ENCODE measurements at regions of chr11 and their contacts with region 1.

Region 1: DNA sequence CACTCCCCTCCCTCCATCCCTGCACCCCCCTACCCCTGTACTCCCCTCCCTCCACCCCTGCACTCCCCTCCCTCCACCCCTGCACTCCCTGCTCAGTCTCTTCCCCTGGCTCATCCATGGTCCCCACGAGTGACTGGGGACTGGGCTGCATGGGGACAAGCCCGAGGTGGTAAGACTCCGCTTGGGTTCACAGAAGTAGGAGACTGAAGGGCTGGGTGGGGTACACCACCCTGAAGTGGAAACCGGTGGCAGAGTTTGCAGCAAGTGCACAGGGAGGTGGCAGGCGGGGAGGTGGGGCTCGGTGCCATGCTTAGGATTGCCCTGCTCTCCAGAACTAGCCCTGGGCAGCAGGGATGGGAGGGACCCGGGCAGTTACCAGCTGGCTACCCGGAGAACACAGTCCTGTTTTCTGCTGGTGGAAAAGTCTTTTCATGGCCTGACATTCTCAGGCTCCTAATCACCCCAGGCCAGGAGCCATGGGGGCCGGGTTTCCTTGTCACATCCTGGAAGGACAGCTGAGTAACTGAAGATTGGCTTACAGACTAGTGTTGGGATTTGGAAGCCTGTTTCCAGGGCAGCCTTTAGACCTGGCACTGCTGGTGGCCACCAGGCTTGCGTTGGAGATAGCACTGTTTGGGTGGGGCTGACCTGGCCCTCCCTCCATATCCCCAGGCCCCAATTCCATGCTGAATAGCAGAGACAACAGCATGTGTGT is 348.8 kb downstream of the CTTN start:
- DNase-seq: no peak
- H3K4me3 ChIP-seq: no peak overlapping the region
- H3K27ac ChIP-seq: no peak overlapping the region
- H3K4me1 ChIP-seq: no peaks in the 10 kb centered on the region
- H3K27me3 ChIP-seq: no peaks in the 10 kb centered on the region
- CTCF ChIP-seq: no peak
- EP300 ChIP-seq: no peak
- POLR2A ChIP-seq: no peak

Region 2: GRCh38 chr11:70483077-70483861 is 263.9 kb before region 1 on chr11:
- intact Hi-C with region 1: loop called in 1 of 4 experiments (anchors 5 kb)
- DNase-seq: no peak
- H3K4me3 ChIP-seq: no peak overlapping the region
- H3K27ac ChIP-seq: no peak overlapping the region
- H3K4me1 ChIP-seq: peaks cover 1% of the 10 kb centered on the region
- H3K27me3 ChIP-seq: no peaks in the 10 kb centered on the region
- CTCF ChIP-seq: no peak
- EP300 ChIP-seq: no peak
- POLR2A ChIP-seq: no peak

Region 3: DNA sequence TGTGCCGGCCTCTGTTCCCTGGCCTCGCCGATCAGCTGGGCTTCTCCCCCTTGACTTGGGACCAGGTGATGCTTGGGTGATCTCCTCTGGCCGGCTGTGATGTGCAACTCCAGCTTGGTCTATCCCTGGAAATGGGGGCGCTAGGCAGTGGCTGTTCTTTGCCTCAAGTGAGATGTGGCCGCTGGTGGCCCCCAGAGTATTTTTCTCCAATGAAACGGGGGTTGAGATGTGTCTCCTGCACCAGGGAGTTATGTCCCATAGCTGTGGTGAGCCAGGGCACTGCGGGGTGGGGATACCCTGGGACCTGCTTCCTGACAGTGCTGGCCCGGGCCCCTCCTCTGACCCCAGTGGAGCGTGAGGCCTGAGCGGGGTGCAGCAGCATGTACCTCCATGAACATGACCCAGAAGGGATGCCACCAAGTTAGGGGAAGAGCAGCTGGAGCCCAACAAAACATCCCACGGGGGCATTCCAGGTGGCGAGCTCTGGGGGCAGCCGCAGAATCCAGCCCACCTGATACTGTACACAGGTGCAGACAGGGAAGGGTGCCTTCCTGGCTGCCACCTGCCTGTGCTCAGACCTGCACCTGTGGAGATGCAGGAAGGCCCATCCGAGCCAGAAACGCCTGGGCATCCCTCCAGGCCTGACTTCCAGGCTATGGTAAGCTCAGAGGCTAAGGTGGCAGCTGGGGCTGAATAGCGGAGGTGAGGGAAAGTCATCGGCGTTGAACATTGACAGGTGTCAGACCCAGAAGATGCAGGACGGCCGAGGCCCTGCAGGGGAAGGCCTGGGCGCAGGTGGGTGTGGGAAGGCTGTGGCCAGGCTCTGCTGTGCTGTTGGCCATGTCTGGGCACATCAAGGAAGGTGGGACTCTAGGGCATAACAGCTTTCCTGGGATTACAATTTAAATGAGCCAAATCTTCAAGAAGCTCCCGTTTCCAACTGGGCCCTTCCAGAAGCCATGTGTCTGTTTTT is 251.5 kb before region 1 on chr11:
- intact Hi-C with region 1: no loop called
- DNase-seq: peak in 2 of 5 donors; percentile 3 to 13
- H3K4me3 ChIP-seq: no peak overlapping the region
- H3K27ac ChIP-seq: no peak overlapping the region
- H3K4me1 ChIP-seq: no peaks in the 10 kb centered on the region
- H3K27me3 ChIP-seq: no peaks in the 10 kb centered on the region
- CTCF ChIP-seq: no peak
- EP300 ChIP-seq: no peak
- POLR2A ChIP-seq: no peak

Region 4: DNA sequence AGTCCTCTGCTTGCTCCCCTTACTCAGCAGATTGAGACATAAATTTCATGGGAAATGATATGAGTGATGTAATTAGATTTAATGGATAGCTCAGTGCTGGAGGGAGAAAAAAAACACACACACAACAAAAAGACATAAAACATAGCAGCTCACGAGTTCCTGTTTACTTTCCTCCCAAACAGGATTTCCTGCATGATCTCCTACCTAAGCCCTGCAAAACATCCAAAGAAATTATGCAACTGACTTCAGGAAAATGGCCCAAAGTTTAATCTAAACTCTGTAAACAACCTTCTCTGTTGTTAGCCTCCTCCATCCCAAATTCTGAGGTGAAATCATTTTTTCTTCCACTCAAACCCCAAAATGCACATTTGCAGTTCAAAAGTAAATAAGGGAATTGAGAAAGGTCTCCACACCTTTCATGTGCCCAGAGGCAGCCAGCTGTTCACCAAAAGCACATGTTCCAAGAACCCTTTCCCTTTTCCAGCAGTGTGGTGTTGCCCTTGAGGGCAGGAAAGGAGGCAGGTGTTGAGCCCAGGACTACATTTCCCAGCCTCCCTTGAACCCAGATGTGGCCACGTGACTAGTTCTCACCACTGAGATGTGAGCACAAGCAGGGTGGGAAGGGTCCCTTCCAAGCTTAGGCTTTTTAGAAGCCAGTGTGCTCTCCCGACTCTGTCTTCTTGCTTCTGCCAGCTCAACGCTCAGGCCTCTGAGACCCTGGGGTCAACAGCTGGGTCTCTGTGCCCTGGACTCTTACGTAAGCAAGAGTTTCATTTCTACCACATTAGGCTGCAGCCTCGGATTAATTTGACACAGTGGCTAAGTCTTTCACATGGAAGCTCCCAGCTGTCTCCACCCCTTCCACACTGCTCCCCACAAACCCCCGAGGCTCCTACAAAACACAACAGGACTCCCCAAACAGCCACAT is 47.6 kb before region 1 on chr11:
- intact Hi-C with region 1: no loop called
- DNase-seq: no peak
- H3K4me3 ChIP-seq: no peak overlapping the region
- H3K27ac ChIP-seq: no peak overlapping the region
- H3K4me1 ChIP-seq: no peaks in the 10 kb centered on the region
- H3K27me3 ChIP-seq: no peaks in the 10 kb centered on the region
- CTCF ChIP-seq: no peak
- EP300 ChIP-seq: no peak
- POLR2A ChIP-seq: no peak

Region 5: DNA sequence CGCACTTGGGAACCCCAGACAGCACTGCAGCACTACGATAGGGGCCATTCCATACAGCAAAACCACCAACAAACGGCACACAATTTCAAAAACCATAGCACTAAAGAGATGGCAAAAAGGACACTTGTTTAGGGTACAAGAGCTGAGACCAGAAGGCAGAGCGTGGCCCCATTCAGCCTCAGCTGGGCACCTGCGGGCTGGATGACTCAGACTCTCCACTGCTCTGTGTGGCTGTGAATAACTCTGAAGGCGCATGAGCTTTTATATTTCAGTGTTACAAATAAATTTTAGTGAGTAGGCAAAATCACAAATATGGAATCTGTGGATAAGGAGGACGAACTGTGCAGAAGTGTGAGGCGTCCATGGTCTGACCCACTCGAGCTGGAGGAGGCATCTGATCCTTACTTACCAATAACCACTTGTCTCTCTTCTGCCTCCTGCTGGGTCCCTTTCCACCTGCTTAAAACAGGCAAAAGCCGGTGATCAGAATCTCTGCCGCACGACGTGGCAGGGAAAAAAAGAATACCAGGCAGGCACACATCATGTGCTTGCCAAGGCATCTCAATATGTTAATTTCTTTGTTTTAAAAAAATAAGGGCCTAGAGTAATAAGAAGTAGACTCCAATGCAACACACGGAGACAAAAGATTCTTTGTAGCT is 179.5 kb after region 1 on chr11:
- intact Hi-C with region 1: no loop called
- DNase-seq: no peak
- H3K4me3 ChIP-seq: no peak overlapping the region
- H3K27ac ChIP-seq: no peak overlapping the region
- H3K4me1 ChIP-seq: no peaks in the 10 kb centered on the region
- H3K27me3 ChIP-seq: no peaks in the 10 kb centered on the region
- CTCF ChIP-seq: no peak
- EP300 ChIP-seq: no peak
- POLR2A ChIP-seq: no peak